Mammary epithelial cell (primary cell): ENCODE measurements at regions of chr2 and their contacts with region 1.

Region 1: GRCh38 chr2:18883616-18884456 is 294.5 kb upstream of the NT5C1B start:
- DNase-seq: peak; percentile 32
- H3K4me3 ChIP-seq: no peak overlapping the region
- H3K27ac ChIP-seq: no peak overlapping the region
- H3K4me1 ChIP-seq: no peaks in the 10 kb centered on the region
- H3K27me3 ChIP-seq: no peaks in the 10 kb centered on the region
- CTCF ChIP-seq: peak; percentile 63 to 64

Region 2: DNA sequence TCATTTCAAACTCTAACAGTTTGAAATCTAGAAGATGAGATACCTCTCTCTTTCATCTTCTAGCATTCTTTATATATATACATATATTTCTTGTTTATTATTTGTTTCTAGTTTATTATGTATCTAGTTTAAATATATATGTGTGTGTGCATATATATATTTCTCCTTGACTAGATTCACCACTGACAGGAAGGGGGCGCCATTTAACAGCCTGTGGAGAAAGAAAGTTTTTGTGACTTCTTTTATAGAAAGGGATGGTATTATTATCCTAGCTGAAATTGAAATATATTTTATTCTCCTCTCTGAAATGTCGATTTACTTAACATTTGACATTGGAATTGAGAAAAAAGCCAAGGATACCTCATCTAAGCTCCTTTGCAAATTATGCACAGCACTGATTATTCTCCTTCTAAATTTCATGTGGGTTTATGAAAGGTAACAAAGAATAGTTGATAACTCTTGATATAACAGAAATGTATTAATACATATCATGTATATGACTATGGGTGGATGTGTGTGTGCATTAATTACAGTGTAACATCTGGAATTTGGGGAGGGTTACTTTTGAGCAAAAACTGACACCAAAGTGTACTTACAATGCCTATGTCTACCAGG is 133.8 kb before region 1 on chr2:
- CTCF ChIA-PET with region 1: no interaction called
- dilution Hi-C with region 1: no loop called
- in situ Hi-C with region 1: no loop called
- intact Hi-C with region 1: loop called (anchors 1 kb)
- DNase-seq: peak; percentile 35
- H3K4me3 ChIP-seq: no peak overlapping the region
- H3K27ac ChIP-seq: no peak overlapping the region
- H3K4me1 ChIP-seq: peaks cover 9% of the 10 kb centered on the region
- H3K27me3 ChIP-seq: no peaks in the 10 kb centered on the region
- CTCF ChIP-seq: peak; percentile 73 to 81

Region 3: DNA sequence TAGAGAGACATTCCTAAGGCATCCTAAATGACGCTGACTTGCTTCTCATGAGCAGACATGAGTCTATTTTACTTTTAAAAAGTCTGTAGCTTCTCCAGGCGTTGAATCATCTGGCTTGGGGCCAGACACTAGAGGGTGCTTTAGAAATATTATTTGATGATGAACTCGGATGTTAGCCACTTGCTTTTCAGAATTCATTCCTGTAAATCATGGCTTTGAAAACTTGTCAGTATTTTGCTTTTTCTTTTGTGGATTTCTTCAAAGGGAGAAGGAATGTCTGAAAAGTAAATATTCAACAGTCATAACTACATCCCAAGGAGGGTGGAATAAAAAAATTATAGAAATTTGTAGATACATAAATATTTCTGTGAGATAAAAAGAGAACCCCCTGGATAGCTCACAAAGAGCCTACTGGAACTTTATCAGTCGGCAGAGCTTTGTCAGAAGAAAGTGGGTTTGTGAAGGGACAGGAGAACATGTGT is 103.8 kb after region 1 on chr2:
- CTCF ChIA-PET with region 1: no interaction called
- dilution Hi-C with region 1: no loop called
- in situ Hi-C with region 1: no loop called
- intact Hi-C with region 1: loop called (anchors 2 kb)
- DNase-seq: peak; percentile 86
- H3K4me3 ChIP-seq: no peak overlapping the region
- H3K27ac ChIP-seq: no peak overlapping the region
- H3K4me1 ChIP-seq: peaks cover 28% of the 10 kb centered on the region
- H3K27me3 ChIP-seq: no peaks in the 10 kb centered on the region
- CTCF ChIP-seq: peak; percentile 24 to 32

Region 4: DNA sequence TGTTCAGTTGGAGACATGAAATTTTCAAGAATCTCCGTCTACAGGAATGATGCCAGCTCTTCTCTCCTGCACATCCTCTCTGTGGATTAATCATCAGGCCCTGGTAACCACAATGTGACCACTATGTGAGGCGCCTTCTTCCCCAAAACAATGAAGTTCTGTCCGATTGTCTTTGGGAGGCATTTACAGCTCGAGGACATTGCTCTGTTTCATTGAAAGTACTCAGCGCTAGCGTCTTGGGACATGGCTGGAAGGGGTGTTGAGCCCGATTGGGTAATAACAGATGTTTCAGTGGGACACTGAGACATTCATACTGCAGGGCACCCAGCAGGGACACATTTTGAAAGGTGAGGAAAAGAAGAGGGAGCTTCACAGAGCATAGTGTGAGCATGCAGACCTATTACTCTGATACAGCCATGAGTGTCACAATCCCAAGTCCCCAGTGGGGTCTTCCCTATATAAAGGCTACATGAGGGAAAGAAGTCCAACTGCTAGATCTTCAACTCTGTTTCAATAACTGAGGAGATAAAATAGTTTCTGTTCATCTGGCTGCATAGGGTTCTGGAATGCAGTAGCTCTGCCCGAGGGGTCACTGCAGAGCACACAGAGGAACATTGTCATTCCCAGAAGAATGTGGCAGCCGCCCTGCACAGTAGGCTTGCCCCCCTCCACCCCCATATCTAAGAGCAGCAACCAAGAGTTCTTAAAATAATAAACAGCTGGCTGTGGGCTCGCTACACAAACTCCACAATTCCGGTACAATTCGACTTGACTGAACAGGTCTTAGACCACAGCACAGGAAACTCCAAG is 237.3 kb after region 1 on chr2:
- CTCF ChIA-PET with region 1: no interaction called
- dilution Hi-C with region 1: no loop called
- in situ Hi-C with region 1: no loop called
- intact Hi-C with region 1: loop called (anchors 10 kb)
- DNase-seq: peak; percentile 98
- H3K4me3 ChIP-seq: no peak overlapping the region
- H3K27ac ChIP-seq: peak overlapping the region; percentile 91
- H3K4me1 ChIP-seq: peaks cover 66% of the 10 kb centered on the region
- H3K27me3 ChIP-seq: no peaks in the 10 kb centered on the region
- CTCF ChIP-seq: peak in 1 of 2 donors; percentile 3

Region 5: DNA sequence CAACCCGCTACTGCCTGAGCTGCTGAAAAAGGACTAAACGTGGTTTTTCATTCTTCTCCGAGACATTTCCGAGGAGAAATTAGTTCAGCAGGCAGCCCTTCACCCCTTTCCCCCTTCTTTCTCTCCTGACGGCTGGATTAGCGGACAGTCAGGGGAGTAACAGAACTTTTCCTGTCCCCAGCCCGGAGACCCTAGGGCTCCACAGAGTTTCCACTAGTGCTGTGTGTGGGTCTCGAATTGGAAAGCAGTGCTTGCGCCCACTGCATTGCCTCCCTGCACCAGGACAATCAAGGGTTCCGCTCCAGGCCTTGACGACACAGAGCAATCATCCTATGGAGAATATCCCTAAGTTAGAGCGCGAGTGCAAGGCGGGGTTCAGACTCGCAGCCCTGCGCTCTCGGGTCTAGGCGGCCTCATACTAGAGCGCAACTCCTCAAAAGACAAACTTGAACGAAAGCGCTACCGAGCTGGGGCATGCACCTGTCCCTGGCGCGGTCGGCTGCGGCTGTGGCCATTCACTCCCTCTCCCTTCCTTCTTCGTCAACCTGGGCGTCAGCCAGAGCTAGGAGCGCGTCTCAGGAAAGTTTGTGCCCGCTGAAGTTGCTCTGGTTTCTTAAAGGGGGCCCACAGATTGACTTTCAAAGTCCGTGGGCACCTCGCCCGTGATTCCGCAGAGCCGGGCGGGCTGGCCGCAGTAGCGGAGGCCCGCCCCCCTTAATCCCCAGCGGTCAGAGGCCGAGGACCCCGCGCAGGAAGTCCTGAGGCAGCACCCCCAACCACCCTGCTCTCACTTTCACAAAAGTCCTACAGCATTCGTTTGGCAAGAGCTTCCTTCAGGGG is 473.8 kb after region 1 on chr2:
- CTCF ChIA-PET with region 1: no interaction called
- dilution Hi-C with region 1: no loop called
- in situ Hi-C with region 1: loop called in 1 of 2 experiments (anchors 10 kb)
- intact Hi-C with region 1: loop called (anchors 1 kb)
- DNase-seq: peak; percentile 49
- H3K4me3 ChIP-seq: peak overlapping the region; percentile 71 to 90 (median 89)
- H3K27ac ChIP-seq: peak overlapping the region; percentile 67
- H3K4me1 ChIP-seq: peaks cover 27% of the 10 kb centered on the region
- H3K27me3 ChIP-seq: no peaks in the 10 kb centered on the region
- CTCF ChIP-seq: no peak

Region 6: GRCh38 chr2:19362755-19363473 is 479.1 kb after region 1 on chr2:
- CTCF ChIA-PET with region 1: no interaction called
- dilution Hi-C with region 1: no loop called
- in situ Hi-C with region 1: loop called in 1 of 2 experiments (anchors 10 kb)
- intact Hi-C with region 1: loop called (anchors 1 kb)
- DNase-seq: peak; percentile 83
- H3K4me3 ChIP-seq: peak overlapping the region; percentile 53 to 67 (median 65)
- H3K27ac ChIP-seq: peak overlapping the region; percentile 45
- H3K4me1 ChIP-seq: peaks cover 24% of the 10 kb centered on the region
- H3K27me3 ChIP-seq: no peaks in the 10 kb centered on the region
- CTCF ChIP-seq: peak; percentile 67 to 79

Region 7: GRCh38 chr2:19673213-19673791 is 789.5 kb after region 1 on chr2:
- CTCF ChIA-PET with region 1: no interaction called
- dilution Hi-C with region 1: no loop called
- in situ Hi-C with region 1: loop called in 1 of 2 experiments (anchors 25 kb)
- intact Hi-C with region 1: no loop called
- DNase-seq: no peak
- H3K4me3 ChIP-seq: no peak overlapping the region
- H3K27ac ChIP-seq: no peak overlapping the region
- H3K4me1 ChIP-seq: peaks cover 12% of the 10 kb centered on the region
- H3K27me3 ChIP-seq: no peaks in the 10 kb centered on the region
- CTCF ChIP-seq: no peak